Heart right ventricle (tissue), 16 donors: ENCODE measurements at regions of chr1 and their contacts with region 1.

Region 1: DNA sequence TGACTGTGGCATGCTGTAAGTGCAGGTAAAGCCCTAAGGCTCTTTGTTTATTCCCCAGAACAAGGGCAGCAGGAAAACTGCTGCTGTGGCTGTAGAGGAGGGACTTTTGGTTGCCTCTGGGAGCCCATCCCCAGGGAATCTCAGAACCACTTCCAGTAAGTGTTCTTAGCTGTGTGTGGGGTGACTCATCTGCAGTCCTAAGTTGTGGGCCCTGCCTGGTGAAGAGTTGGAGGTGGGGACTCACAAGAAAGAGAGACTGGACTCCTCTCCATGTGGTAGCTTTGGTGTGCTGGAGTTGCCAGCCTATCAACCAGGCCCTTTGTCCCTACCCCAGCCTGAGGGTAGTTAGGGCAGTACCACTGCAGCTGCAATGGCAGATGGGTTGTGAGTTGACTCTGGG is 24.0 kb upstream of the DENND1B start:
- DNase-seq: no peak
- ATAC-seq: peak in 1 of 8 donors; percentile 35
- H3K4me3 ChIP-seq: no peak overlapping the region
- H3K27ac ChIP-seq: no peak overlapping the region
- H3K4me1 ChIP-seq: no peaks in the 10 kb centered on the region
- H3K27me3 ChIP-seq: no peaks in the 10 kb centered on the region
- CTCF ChIP-seq: no peak

Region 2: DNA sequence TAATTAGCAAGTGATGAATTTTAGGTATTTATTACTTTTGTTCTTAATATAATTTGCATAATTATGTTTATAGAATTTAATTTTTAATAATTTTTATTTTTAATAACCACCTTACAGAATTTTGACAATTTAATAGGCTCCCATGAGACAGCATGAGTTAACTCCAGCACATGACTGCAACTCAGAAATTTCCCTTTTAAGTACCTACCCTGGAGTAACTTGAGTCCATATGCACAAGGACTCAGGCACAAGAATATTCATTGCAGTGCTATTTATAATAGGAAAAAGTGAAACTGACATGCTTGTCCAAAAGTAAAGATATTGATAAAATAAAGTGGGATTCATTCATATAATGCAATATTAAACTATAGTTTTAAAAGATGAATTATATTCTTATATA is 49.1 kb after region 1 on chr1:
- intact Hi-C with region 1: loop called in 1 of 10 experiments (anchors 5 kb)
- DNase-seq: no peak
- ATAC-seq: no peak
- H3K4me3 ChIP-seq: no peak overlapping the region
- H3K27ac ChIP-seq: no peak overlapping the region
- H3K4me1 ChIP-seq: no peaks in the 10 kb centered on the region
- H3K27me3 ChIP-seq: peaks cover 0 to 21% (median 3%) of the 10 kb centered on the region in 7 donors
- CTCF ChIP-seq: no peak